Activated naive CD4-positive, alpha-beta T cell treated with anti-CD3 and anti-CD28 coated beads for 36 hours (primary cell): ENCODE measurements at regions of chr16 and their contacts with region 1.

Region 1: DNA sequence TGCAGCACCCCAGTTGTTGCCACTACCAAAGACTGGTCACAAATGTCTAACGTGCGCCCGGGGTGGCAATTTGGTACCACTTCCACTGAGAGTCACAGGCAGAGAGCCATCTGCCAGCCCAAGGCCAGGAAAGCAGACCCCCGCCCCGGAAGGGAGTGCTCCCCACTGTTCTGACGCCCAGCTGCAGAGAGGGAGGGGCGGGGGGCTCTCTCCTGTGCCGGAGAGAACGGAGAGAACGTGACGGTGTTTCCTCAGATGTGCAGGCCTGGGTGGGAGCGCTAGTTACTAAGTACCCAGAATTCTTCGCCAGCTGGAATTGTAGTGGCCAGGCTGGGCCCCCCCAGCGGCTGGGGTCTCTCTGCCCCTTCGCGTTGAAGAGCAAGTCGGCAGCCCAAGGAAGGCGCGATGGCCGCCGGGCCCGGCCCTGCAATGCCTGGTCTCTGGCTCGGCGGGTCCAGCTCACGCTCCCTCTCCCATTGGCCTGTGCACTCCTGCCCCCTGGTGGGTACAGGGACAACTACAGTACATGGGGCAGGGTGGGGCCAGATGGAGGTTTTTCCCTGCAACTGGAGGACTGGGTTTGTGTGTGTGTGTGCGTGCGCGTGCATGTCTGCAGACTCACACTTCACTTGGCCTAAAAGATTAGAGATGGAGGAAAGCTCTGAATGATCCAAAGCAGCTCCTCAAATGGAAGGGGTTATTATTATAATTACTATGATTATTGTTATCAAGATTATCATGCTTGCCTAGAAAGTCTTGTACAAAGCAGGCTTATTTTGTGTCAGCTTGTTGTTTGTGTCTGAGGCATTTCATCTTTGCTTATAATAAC is 107.1 kb downstream of the AMFR start:
- DNase-seq: peak; percentile 86
- H3K4me3 Mint-ChIP-seq: peak overlapping the region; percentile 3
- H3K27ac Mint-ChIP-seq: no peak overlapping the region
- H3K4me1 Mint-ChIP-seq: peaks cover 2% of the 10 kb centered on the region
- H3K27me3 Mint-ChIP-seq: no peaks in the 10 kb centered on the region

Region 2: GRCh38 chr16:55711959-55712876 is 606.0 kb before region 1 on chr16:
- CTCF ChIA-PET with region 1: no interaction called
- intact Hi-C with region 1: loop called (anchors 2 kb)
- DNase-seq: peak; percentile 74
- H3K4me3 Mint-ChIP-seq: no peak overlapping the region
- H3K27ac Mint-ChIP-seq: no peak overlapping the region
- H3K4me1 Mint-ChIP-seq: no peaks in the 10 kb centered on the region
- H3K27me3 Mint-ChIP-seq: peaks cover 10% of the 10 kb centered on the region

Region 3: GRCh38 chr16:55842369-55843104 is 475.7 kb before region 1 on chr16:
- CTCF ChIA-PET with region 1: no interaction called
- intact Hi-C with region 1: loop called (anchors 5 kb)
- DNase-seq: peak; percentile 22
- H3K4me3 Mint-ChIP-seq: no peak overlapping the region
- H3K27ac Mint-ChIP-seq: no peak overlapping the region
- H3K4me1 Mint-ChIP-seq: no peaks in the 10 kb centered on the region
- H3K27me3 Mint-ChIP-seq: peaks cover 20% of the 10 kb centered on the region

Region 4: DNA sequence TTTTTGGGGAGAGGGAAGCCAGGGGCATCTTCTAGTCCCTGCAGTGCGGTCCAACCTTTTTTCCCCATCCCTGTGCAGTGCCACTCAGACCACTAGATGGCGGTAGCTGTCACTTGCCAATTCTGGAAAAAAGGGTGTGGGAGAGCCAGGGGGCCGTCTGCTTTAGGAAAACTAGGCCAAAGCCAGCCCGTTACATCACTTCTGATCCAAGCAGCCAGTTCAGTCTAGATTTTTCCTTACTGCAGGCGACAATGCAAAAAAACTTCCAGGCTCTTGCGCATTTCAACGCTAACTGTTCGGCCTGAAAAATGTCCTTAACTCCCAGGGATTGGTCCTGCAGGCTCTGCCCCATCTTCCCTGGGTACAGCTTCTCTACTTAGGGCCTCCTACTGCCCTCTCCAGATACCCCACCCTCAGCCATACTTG is 373.8 kb before region 1 on chr16:
- CTCF ChIA-PET with region 1: interaction called, 32 read pairs
- intact Hi-C with region 1: loop called (anchors 1 kb)
- DNase-seq: peak; percentile 62
- H3K4me3 Mint-ChIP-seq: no peak overlapping the region
- H3K27ac Mint-ChIP-seq: no peak overlapping the region
- H3K4me1 Mint-ChIP-seq: no peaks in the 10 kb centered on the region
- H3K27me3 Mint-ChIP-seq: peaks cover 29% of the 10 kb centered on the region

Region 5: GRCh38 chr16:56041686-56042085 is 276.5 kb before region 1 on chr16:
- CTCF ChIA-PET with region 1: interaction called, 6 read pairs
- intact Hi-C with region 1: loop called (anchors 1 kb)
- DNase-seq: peak; percentile 41
- H3K4me3 Mint-ChIP-seq: no peak overlapping the region
- H3K27ac Mint-ChIP-seq: no peak overlapping the region
- H3K4me1 Mint-ChIP-seq: no peaks in the 10 kb centered on the region
- H3K27me3 Mint-ChIP-seq: peaks cover 5% of the 10 kb centered on the region

Region 6: GRCh38 chr16:56356276-56357240 is 38.3 kb after region 1 on chr16:
- CTCF ChIA-PET with region 1: no interaction called
- intact Hi-C with region 1: no loop called
- DNase-seq: peak; percentile 68
- H3K4me3 Mint-ChIP-seq: peak overlapping the region; percentile 74
- H3K27ac Mint-ChIP-seq: peak overlapping the region; percentile 86
- H3K4me1 Mint-ChIP-seq: peaks cover 31% of the 10 kb centered on the region
- H3K27me3 Mint-ChIP-seq: no peaks in the 10 kb centered on the region